WTC11 (cell line): ENCODE measurements at regions of chr14 and their contacts with region 1.

Region 1: GRCh38 chr14:67426983-67427606 is 15.1 kb upstream of the PLEK2 start:
- DNase-seq: peak; percentile 85
- ATAC-seq: peak; percentile 95
- H3K4me3 Mint-ChIP-seq: peak overlapping the region; percentile 20; the same call in 1 of the 2 replicates
- H3K27ac Mint-ChIP-seq: no peak overlapping the region
- H3K4me1 Mint-ChIP-seq: peaks cover 12% of the 10 kb centered on the region
- H3K27me3 Mint-ChIP-seq: peaks cover 3% of the 10 kb centered on the region; the same call in 1 of the 2 replicates
- CTCF ChIP-seq: peak; percentile 75

Region 2: GRCh38 chr14:67446120-67447032 is 19.3 kb after region 1 on chr14:
- CTCF ChIA-PET with region 1: interaction called, 22 read pairs
- POLR2A ChIA-PET with region 1: no interaction called
- DNase-seq: no peak
- ATAC-seq: no peak
- H3K4me3 Mint-ChIP-seq: no peak overlapping the region
- H3K27ac Mint-ChIP-seq: no peak overlapping the region
- H3K4me1 Mint-ChIP-seq: peaks cover 53% of the 10 kb centered on the region
- H3K27me3 Mint-ChIP-seq: peaks cover 9% of the 10 kb centered on the region; the same call in 1 of the 2 replicates
- CTCF ChIP-seq: no peak

Region 3: DNA sequence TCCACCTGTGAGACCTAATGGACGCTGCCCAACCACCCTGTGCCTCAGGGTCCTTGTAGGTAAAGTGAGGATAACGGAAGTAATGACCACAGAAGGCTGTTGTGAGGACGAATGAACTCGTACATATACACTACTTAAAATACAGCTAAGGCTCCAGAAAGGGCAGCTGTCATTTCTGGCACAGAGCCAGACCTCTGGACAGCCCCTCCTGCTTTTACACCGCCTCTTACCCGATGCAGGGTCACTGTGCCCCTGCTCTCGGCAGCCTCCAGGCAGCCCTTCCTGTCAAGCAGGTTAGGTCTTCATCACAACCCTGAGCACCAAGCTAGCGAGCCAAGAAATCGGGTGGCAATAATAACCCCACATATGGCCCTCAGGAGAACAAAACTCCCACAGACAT is 52.9 kb after region 1 on chr14:
- CTCF ChIA-PET with region 1: interaction called, 18 read pairs
- POLR2A ChIA-PET with region 1: no interaction called
- DNase-seq: no peak
- ATAC-seq: no peak
- H3K4me3 Mint-ChIP-seq: no peak overlapping the region
- H3K27ac Mint-ChIP-seq: no peak overlapping the region
- H3K4me1 Mint-ChIP-seq: peaks cover 7% of the 10 kb centered on the region
- H3K27me3 Mint-ChIP-seq: no peaks in the 10 kb centered on the region
- CTCF ChIP-seq: no peak

Region 4: DNA sequence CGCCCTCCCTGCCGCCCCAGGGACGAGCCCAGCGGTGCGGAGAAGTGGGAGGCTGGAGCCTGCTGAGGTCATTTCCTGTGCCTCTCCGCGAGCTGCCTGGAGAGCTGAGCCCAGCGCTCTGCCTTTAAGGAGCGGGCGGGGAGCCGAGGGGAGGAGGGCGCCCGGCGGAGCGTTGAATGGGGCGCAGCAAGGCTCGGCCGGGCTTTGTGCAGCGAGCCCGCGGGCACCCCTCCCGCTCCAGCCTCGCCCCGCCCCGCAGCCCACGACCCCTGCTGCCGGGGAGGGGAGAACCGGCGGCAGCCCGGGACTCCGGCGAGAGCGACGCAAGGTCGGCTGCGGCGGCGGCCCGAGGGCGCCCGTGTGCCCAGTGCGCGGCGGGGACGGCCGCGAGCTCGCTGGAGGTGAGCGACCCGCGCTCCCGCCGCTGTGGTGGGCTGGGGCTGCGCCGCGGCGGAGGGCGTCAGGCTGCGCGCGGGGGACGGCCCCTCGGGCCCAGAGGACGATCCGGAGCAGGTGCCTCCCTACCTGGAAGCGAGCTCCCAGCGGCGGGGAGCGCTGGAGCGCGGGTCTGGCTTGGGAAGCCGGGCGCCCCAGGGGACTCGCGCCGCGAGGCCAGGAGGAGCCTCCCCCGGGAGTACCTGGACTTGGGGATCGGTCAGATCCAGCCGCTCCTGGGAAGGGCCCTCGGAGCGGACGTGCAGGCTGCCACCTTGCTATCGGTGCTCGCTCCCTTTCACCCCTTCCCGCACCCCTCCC is 106.1 kb after region 1 on chr14 and contains the start of gene PLEKHH1:
- CTCF ChIA-PET with region 1: interaction called, 89 read pairs
- POLR2A ChIA-PET with region 1: no interaction called
- DNase-seq: peak; percentile 75
- ATAC-seq: peak; percentile 88
- H3K4me3 Mint-ChIP-seq: peak within 1 kb of the TSS; percentile 86
- H3K27ac Mint-ChIP-seq: peak within 1 kb of the TSS; percentile 89
- H3K4me1 Mint-ChIP-seq: peaks cover 34% of the 10 kb centered on the region
- H3K27me3 Mint-ChIP-seq: peaks cover 2% of the 10 kb centered on the region; the same call in 1 of the 2 replicates
- CTCF ChIP-seq: no peak
- total RNA-seq, gene PLEKHH1: 45.4 to 49.8 TPM (median 48.3 TPM) in 3 replicates

Region 5: DNA sequence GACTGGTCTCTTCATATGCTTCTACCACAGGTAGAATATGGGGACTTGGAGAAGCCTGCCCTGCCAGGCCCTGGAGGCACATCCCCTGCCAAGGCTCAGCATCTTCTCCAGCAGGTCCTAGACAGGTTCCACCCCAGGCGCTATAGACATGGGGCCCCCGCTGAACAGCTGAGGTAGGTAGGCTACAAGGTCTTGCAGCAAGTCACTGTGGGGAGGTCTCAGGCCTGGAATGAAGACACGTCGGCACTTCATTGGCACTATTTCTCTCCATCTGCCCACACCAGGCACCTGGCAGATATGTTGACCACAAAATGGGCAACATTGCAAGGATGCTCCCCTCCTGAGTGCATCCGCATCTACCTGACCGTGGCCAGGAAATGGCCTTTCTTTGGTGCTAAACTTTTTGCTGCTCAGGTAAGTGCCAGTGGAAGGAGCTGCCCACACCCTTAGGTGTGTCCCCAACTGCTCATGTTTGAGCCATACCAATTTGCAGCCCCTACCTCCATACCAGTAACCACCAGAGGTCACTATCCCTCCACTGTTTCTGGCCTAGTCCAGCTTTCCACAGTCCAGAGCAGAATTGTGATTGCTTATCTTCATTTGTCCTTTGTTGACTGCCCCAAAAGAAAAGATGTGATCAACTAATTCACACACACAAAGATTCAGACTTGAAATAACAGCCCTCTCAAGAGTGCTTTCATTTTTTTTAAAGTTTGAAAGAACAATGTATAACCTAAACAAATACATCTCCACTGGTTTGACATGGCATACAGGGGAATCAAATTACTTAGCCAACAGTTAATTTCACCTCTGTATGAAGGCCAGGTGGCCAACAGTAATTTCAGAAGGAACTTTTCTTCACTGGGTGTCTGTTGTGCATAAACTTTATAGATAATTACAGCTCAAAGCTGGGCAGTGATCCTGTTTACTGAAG is 156.9 kb after region 1 on chr14:
- CTCF ChIA-PET with region 1: interaction called, 15 read pairs
- POLR2A ChIA-PET with region 1: no interaction called
- DNase-seq: peak; percentile 29
- ATAC-seq: peak; percentile 92
- H3K4me3 Mint-ChIP-seq: no peak overlapping the region
- H3K27ac Mint-ChIP-seq: no peak overlapping the region
- H3K4me1 Mint-ChIP-seq: no peaks in the 10 kb centered on the region
- H3K27me3 Mint-ChIP-seq: no peaks in the 10 kb centered on the region
- CTCF ChIP-seq: peak; percentile 36; the same call in 1 of the 2 replicates

Region 6: GRCh38 chr14:67695394-67695949 is 268.4 kb after region 1 on chr14 and contains the start of gene RDH11:
- CTCF ChIA-PET with region 1: interaction called, 12 read pairs
- POLR2A ChIA-PET with region 1: no interaction called
- DNase-seq: peak; percentile 86
- ATAC-seq: peak; percentile 93
- H3K4me3 Mint-ChIP-seq: peak within 1 kb of the TSS; percentile 96
- H3K27ac Mint-ChIP-seq: peak within 1 kb of the TSS; percentile 99
- H3K4me1 Mint-ChIP-seq: peaks cover 11% of the 10 kb centered on the region
- H3K27me3 Mint-ChIP-seq: peaks cover 11% of the 10 kb centered on the region
- CTCF ChIP-seq: no peak
- total RNA-seq, gene RDH11: 103 to 114 TPM (median 110 TPM) in 3 replicates